Right cardiac atrium (tissue), 5 donors: ENCODE measurements at regions of chr13 and their contacts with region 1.

Region 1: GRCh38 chr13:40688781-40689180 is 22.3 kb upstream of the FOXO1 start:
- DNase-seq: no peak
- ATAC-seq: no peak
- H3K4me3 ChIP-seq: no peak overlapping the region
- H3K27ac ChIP-seq: no peak overlapping the region
- H3K4me1 ChIP-seq: no peaks in the 10 kb centered on the region
- H3K27me3 ChIP-seq: no peaks in the 10 kb centered on the region

Region 2: DNA sequence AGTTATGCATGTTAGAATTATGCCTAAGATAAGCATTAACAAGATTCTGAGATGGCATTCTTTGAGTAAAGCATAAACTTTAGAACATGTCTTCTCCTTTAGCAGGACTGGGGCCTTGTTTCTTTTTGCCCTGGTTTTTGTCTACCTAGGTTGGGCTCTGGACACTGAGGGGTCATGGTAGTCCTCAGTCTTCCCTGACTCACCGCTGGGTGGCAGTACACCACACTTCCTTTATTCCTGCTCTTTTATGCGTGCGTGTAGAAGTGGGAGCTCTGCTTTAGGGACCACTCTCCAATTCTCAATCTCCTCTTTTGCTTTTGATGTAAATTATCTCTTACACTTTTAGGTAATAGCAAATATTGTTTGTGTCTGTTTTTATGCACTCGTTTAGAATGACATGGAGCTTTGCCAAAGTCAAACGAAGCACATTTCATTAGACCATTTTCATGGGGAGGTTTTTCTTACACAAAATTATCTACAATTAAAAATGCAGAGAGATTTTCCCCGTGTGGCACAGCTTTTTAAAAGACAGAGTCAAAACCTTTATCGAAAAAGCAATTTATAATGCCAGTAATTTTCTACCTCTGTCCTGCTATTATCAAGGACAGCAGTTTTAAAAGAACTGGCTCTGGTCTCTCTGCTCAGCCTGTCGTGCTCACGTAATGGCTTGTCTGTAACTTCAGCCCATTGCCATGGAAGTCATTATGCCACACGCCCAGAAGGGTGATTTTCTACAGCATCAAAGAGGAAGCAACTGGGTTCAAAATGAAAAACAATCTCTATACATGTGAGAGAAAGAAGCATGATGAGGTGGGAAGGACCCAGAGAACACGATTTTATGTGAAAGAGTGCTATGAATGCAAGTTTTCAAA is 619.4 kb before region 1 on chr13:
- intact Hi-C with region 1: loop called (anchors 5 to 10 kb)
- DNase-seq: peak; percentile 77 to 91 (median 87)
- ATAC-seq: peak; percentile 92
- H3K4me3 ChIP-seq: no peak overlapping the region
- H3K27ac ChIP-seq: peak overlapping the region; percentile 24
- H3K4me1 ChIP-seq: no peaks in the 10 kb centered on the region
- H3K27me3 ChIP-seq: no peaks in the 10 kb centered on the region

Region 3: DNA sequence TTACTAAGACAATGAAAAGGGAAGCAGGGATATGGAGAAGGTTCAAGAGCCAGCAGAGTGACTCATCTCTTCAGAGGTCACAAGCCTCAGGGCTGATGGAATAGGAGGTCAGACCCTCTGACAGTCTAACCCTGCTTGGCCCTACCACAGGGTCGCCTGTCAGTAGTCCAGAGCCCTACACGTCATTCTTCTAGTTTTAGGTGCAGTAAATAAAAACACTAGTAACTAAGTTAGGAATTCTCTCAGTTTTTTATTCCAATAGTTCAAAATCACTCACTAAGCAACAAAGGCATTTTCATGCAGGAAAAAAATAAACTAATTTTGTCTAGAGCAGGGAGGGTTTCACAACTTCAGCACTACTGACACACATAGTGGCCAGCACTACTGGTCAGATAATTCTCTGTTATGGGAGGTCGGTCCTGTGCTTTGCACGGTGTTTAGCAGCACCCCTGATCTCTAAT is 49.5 kb before region 1 on chr13:
- intact Hi-C with region 1: no loop called
- DNase-seq: no peak
- ATAC-seq: peak; percentile 79 to 90
- H3K4me3 ChIP-seq: no peak overlapping the region
- H3K27ac ChIP-seq: no peak overlapping the region
- H3K4me1 ChIP-seq: peaks cover 16% of the 10 kb centered on the region
- H3K27me3 ChIP-seq: no peaks in the 10 kb centered on the region